ENCODE measurements at regions of chr1 and their contacts with region 1.

Region 1: GRCh38 chr1:110203021-110203661 is 7.0 kb upstream of the KCNC4 start:
- DNase-seq: peak; percentile 78
- CTCF ChIP-seq: peak; percentile 81

Region 2: GRCh38 chr1:110011527-110012041 is 191.6 kb before region 1 on chr1:
- CTCF ChIA-PET with region 1: no interaction called
- POLR2A ChIA-PET with region 1: no interaction called
- DNase-seq: peak; percentile 80
- CTCF ChIP-seq: peak; percentile 50

Region 3: DNA sequence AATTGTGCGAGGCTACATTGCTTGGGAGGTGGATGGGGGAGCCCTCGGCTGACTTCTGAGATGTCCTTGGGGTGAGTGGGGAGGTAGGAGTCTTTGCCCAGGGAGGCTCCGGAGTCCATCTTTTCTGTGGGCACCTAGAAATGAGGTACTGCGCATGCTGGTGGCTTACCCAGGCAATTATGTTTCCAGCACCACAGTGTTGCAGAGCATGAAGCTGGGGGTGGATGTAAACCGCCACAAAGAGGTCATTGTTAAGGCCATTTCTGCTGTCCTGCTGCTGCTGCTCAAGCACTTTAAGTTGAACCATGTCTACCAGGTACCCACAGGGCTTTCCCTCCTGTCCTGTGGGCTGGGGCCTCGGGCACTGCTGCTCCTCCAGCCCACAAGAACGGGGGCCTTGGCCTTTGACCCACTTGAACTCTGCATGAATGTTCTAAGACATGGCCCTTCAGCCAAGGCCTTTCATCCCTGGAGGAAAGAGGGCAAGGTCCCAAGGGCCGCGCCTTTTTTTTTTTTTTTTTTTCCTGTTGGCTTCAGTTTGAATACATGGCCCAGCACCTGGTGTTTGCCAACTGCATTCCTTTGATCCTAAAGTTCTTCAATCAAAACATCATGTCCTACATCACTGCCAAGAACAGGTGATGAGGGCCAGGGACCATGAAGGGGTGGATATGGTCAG is 154.1 kb before region 1 on chr1:
- CTCF ChIA-PET with region 1: no interaction called
- POLR2A ChIA-PET with region 1: no interaction called
- DNase-seq: no peak
- CTCF ChIP-seq: no peak

Region 4: GRCh38 chr1:110070685-110071242 is 132.4 kb before region 1 on chr1:
- CTCF ChIA-PET with region 1: no interaction called
- POLR2A ChIA-PET with region 1: no interaction called
- DNase-seq: no peak
- CTCF ChIP-seq: no peak

Region 5: GRCh38 chr1:110150330-110151174 is 52.6 kb before region 1 on chr1 and contains the start of gene SLC6A17:
- CTCF ChIA-PET with region 1: no interaction called
- POLR2A ChIA-PET with region 1: no interaction called
- DNase-seq: no peak
- CTCF ChIP-seq: no peak

Region 6: GRCh38 chr1:110188035-110188618 is 15.0 kb before region 1 on chr1:
- CTCF ChIA-PET with region 1: interaction called, 40 read pairs
- POLR2A ChIA-PET with region 1: no interaction called
- DNase-seq: no peak
- CTCF ChIP-seq: no peak

Region 7: DNA sequence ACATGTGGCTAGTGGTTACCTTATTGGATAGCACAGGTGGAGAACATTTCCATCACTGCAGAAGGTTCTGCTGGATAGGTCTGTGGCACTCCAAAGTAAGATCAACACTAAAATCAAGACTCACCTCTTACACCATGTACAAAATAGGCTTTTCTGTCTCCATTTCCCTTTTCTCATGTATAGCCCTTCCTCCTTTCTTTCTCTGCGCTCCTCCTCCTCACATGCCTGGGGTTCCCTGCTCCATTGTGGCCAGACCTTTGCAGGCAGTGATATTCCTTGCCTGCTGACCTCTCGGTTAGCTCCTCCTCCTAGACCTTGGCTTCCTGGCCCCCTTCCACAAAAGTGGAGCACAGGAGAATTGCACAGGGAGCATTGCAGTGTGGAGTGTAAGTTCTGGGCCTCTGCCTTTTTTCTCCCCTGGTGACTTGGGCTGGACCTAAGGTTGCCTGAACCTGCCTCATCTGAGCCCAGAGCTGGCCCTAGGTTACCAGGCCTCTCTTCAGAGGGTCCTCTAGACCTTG is 102.8 kb after region 1 on chr1:
- CTCF ChIA-PET with region 1: interaction called, 352 read pairs
- POLR2A ChIA-PET with region 1: no interaction called
- DNase-seq: no peak
- CTCF ChIP-seq: no peak

Region 8: GRCh38 chr1:110328274-110328673 is 125.1 kb after region 1 on chr1:
- CTCF ChIA-PET with region 1: interaction called, 58 read pairs
- POLR2A ChIA-PET with region 1: no interaction called
- DNase-seq: no peak
- CTCF ChIP-seq: no peak

Region 9: GRCh38 chr1:110412576-110412975 is 209.4 kb after region 1 on chr1:
- CTCF ChIA-PET with region 1: interaction called, 19 read pairs
- POLR2A ChIA-PET with region 1: no interaction called
- DNase-seq: peak; percentile 64
- CTCF ChIP-seq: peak; percentile 64

Region 10: GRCh38 chr1:110455151-110455550 is 252.0 kb after region 1 on chr1:
- CTCF ChIA-PET with region 1: interaction called, 295 read pairs
- POLR2A ChIA-PET with region 1: no interaction called
- DNase-seq: no peak
- CTCF ChIP-seq: no peak

Region 11: DNA sequence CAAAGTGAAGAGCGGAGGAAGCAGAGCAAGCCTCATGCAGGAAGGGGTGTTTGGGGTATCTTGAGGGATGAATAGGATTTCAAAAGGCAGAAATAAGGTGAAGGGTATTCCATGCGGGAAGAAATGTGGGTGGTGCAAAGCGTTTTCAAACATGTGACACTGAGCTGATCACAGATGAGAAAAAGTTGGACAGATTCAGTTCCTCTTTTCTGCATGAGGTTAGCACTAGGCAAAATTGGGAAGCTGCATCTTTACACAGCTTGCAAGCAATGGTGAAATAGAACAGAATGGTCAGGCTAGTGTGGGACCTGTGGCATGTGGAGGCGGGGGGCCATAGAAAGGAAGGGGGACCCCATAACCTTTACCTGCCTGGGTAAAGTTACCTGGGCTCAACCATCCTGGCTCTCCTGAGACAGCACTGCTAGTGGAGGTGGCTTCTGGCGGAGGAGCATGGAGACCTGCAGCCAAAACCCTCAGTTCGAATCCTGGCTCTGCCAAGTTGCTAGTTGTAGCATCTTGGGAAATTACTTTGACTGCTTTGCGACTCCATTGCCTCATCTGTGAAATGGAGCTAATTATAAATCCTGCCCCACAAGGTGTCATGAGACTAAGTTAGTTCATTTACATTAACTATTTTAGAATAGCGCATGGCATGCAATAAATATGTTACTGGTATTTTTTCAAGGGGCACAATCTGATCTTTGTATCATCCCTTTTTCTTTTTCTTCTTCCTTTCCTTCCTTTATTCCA is 299.4 kb after region 1 on chr1:
- CTCF ChIA-PET with region 1: interaction called, 114 read pairs
- POLR2A ChIA-PET with region 1: no interaction called
- DNase-seq: no peak
- CTCF ChIP-seq: no peak